Posterior cingulate gyrus (tissue), 11 donors: ENCODE measurements at regions of chr1 and their contacts with region 1.

Region 1: GRCh38 chr1:153946622-153947241 is at the start of gene DENND4B:
- DNase-seq: peak; percentile 66 to 97 (median 78)

Region 2: GRCh38 chr1:153796791-153797659 is 149.7 kb before region 1 on chr1:
- intact Hi-C with region 1: loop called (anchors 2 kb)
- DNase-seq: peak in 7 of 10 donors; percentile 68 to 89 (median 75)

Region 3: GRCh38 chr1:153816283-153816889 is 130.3 kb before region 1 on chr1:
- intact Hi-C with region 1: loop called (anchors 1 kb)
- DNase-seq: peak in 1 of 10 donors; percentile 18

Region 4: GRCh38 chr1:153958111-153958960 is 11.6 kb after region 1 on chr1 and contains the start of gene CRTC2:
- intact Hi-C with region 1: loop called (anchors 1 kb)
- DNase-seq: peak; percentile 98 to 100 (median 99)